ENCODE measurements at regions of chr4 and their contacts with region 1.

Region 1: DNA sequence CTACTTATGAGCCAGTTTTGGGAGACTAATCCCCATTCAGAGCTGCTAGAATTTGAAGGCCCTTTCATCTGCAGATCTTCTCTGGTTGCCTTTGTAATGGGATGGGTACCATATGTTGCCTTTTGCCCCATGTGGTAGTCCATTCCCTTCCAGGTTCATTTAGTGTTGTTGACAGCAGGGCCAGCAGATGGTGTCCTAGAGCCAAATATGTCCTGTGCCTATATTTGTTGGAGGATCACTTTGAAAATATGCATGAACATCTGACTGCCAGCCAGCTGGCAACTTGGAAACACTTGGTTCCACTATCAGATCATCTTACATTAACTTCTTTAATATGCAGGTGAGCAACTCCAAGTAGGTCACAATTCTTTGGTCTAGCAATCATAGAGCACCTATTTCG is 30.4 kb downstream of the CFAP299 start:
- DNase-seq: peak; percentile 92
- H3K4me3 ChIP-seq: no peak overlapping the region
- H3K27ac ChIP-seq: peak overlapping the region; percentile 80
- H3K4me1 ChIP-seq: peaks cover 40% of the 10 kb centered on the region
- CTCF ChIP-seq: peak; percentile 92

Region 2: DNA sequence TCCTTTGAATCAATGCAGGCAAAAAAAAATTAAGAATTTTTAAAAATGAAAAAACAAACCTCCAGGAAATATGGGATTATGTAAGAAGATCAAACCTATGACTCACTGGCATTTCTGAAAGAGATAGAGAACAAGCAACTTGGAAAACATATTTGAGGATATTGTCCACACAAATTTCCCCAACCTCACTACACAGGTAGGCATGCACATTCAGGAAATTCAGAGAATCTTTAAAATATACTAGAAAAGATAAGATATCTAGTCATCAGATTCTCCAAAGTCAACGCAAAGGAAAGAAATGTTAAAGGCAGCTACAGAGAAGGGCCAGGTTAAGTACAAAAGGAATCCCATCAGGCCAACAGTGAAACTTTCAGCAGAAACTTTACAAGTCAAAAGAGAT is 378.5 kb before region 1 on chr4:
- CTCF ChIA-PET with region 1: no interaction called
- POLR2A ChIA-PET with region 1: no interaction called
- intact Hi-C with region 1: no loop called
- DNase-seq: no peak
- H3K4me3 ChIP-seq: no peak overlapping the region
- H3K27ac ChIP-seq: no peak overlapping the region
- H3K4me1 ChIP-seq: no peaks in the 10 kb centered on the region
- CTCF ChIP-seq: no peak

Region 3: GRCh38 chr4:80610845-80611677 is 245.1 kb after region 1 on chr4:
- CTCF ChIA-PET with region 1: no interaction called
- POLR2A ChIA-PET with region 1: interaction called, 9 read pairs
- intact Hi-C with region 1: loop called (anchors 1 kb)
- DNase-seq: peak; percentile 99
- H3K4me3 ChIP-seq: peak overlapping the region; percentile 40
- H3K27ac ChIP-seq: peak overlapping the region; percentile 99
- H3K4me1 ChIP-seq: peaks cover 69% of the 10 kb centered on the region
- CTCF ChIP-seq: no peak

Region 4: DNA sequence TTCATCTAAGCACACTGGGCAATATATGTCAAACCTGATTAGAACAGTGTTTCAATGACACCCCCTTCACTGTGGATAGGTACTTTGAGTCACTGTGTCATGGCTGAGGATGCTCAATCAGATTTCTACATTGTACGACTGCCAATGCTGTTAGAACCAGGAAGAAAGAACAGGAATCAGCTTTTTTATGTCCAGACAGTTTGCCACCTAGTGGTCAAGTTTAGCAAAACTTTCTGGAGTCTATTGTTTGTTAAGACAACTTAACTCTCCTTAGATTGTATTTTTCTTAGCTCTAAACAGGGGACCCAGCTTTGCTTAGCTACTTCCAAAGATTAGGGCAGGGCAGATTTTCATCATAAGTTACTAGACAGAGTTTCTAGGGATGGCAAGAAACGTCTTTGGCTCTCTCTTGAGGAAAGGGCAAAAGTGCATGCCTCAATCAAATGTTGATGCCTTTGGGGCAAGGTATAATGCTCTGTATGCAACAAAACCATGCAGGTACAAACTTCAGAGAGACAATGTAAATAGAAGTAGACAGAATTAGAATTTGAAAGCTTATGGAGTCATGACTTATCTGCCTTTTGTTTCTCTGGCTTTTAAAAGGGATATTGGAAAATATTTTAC is 624.1 kb after region 1 on chr4:
- CTCF ChIA-PET with region 1: no interaction called
- POLR2A ChIA-PET with region 1: interaction called, 3 read pairs
- intact Hi-C with region 1: loop called (anchors 1 kb)
- DNase-seq: peak; percentile 87
- H3K4me3 ChIP-seq: peak overlapping the region; percentile 5
- H3K27ac ChIP-seq: peak overlapping the region; percentile 97
- H3K4me1 ChIP-seq: peaks cover 45% of the 10 kb centered on the region
- CTCF ChIP-seq: peak; percentile 93

Region 5: GRCh38 chr4:81052119-81053068 is 686.5 kb after region 1 on chr4:
- CTCF ChIA-PET with region 1: interaction called, 8 read pairs
- POLR2A ChIA-PET with region 1: interaction called, 16 read pairs
- intact Hi-C with region 1: loop called (anchors 1 kb)
- DNase-seq: peak; percentile 99
- H3K4me3 ChIP-seq: peak overlapping the region; percentile 50
- H3K27ac ChIP-seq: peak overlapping the region; percentile 95
- H3K4me1 ChIP-seq: peaks cover 75% of the 10 kb centered on the region
- CTCF ChIP-seq: peak; percentile 100

Region 6: DNA sequence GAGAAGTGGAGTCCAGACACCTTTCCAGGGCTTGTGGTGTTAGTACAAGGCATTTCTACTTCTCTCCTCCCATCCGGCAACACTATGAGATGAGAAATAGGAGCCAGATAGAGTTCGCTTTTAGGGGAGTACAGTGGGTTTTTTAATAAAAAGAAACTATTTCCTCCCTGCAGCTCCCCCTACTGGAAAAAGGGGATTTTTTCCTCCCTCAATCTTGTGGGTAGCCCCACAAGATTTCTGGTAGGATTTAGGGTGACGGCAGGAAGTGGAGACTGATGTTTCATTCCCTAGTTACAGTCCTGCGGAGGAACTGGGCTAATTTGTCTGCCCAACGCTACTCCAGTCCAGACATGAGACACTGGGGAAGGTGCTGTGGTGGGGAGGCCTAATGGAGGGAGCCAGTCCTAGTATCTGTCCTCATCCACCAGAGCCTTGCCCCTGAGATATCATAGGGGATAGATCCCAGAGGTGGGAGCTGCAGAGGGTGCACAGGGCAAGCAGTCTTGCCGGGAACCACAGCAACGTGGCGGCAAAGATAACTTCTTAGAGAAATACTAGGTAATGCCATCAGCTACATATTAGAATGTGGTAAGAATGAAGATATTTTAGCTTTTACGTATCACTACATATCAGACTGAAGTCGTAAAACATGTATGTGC is 894.6 kb after region 1 on chr4:
- CTCF ChIA-PET with region 1: no interaction called
- POLR2A ChIA-PET with region 1: interaction called, 3 read pairs
- intact Hi-C with region 1: loop called (anchors 1 kb)
- DNase-seq: peak; percentile 37
- H3K4me3 ChIP-seq: no peak overlapping the region
- H3K27ac ChIP-seq: no peak overlapping the region
- H3K4me1 ChIP-seq: no peaks in the 10 kb centered on the region
- CTCF ChIP-seq: peak; percentile 78

Region 7: DNA sequence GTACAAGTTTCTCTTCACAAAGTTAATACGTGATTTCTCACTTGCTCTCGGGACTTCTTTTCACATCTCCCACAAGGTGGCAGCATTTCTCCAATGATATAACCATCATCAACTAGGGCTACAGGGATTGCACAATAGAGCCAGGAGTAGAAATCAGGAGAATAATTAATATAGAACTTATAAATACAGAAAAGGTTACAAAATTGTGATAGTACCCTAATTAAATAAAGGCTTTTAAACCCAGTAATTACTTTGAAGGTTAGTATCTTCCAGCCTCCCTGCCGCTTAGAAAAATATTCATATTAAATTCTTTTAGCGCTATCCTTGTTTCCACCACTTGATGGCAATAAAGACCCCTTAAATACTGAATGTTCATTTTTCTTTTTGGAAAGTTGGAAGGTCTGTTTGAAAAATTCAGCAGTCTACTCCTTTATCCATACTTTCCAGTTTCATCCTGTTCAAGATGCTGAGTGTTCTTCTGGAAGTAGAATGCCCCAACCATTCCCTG is 1040.0 kb after region 1 on chr4:
- CTCF ChIA-PET with region 1: no interaction called
- POLR2A ChIA-PET with region 1: no interaction called
- intact Hi-C with region 1: loop called (anchors 1 kb)
- DNase-seq: peak; percentile 85
- H3K4me3 ChIP-seq: no peak overlapping the region
- H3K27ac ChIP-seq: no peak overlapping the region
- H3K4me1 ChIP-seq: no peaks in the 10 kb centered on the region
- CTCF ChIP-seq: peak; percentile 100

Measured in OCI-LY7 (cell line).